ENCODE measurements at regions of chr14 and their contacts with region 1.

Region 1: DNA sequence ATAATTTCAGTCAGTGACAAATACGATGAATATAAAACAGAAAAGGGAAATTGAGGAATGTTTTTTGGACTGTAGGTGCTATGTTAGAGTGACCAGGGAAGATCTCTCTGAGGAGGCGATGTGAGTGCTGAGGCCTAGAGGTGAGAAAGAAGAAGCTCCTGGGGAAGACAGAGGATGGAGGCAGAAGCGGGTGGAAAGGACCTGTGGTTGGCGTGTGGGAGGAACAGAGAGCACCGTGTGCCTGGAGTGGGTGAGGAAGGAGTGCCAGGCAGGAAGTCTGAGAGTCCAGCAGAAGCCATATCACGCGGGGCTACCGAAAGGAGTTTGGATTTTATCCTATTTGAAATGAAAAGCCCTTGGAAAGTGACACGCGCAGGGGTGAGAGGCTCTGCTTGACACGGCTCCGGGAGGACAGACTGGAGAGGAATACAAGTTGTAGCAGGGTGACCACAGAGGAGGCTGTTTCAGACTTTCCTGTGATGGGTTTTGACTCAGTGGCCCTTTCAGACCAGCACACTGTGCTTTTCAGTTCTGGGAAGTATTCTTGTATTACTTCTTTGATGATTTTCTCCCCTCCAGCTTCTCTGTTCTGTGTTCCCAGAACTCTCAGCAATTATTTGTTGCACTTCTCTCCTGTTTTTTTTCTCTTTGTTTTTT is 96.9 kb downstream of the VRK1 start:
- DNase-seq: no peak
- H3K4me3 ChIP-seq: no peak overlapping the region
- H3K27ac ChIP-seq: no peak overlapping the region
- H3K4me1 ChIP-seq: no peaks in the 10 kb centered on the region
- H3K27me3 ChIP-seq: no peaks in the 10 kb centered on the region
- CTCF ChIP-seq: no peak

Region 2: GRCh38 chr14:96824283-96824682 is 69.8 kb before region 1 on chr14:
- CTCF ChIA-PET with region 1: no interaction called
- POLR2A ChIA-PET with region 1: no interaction called
- intact Hi-C with region 1: loop called (anchors 2 kb)
- DNase-seq: no peak
- H3K4me3 ChIP-seq: no peak overlapping the region
- H3K27ac ChIP-seq: no peak overlapping the region
- H3K4me1 ChIP-seq: no peaks in the 10 kb centered on the region; the same call in 1 of the 2 replicates
- H3K27me3 ChIP-seq: no peaks in the 10 kb centered on the region
- CTCF ChIP-seq: no peak

Region 3: GRCh38 chr14:97458661-97459579 is 564.8 kb after region 1 on chr14:
- CTCF ChIA-PET with region 1: no interaction called
- POLR2A ChIA-PET with region 1: no interaction called
- intact Hi-C with region 1: no loop called
- DNase-seq: no peak
- H3K4me3 ChIP-seq: no peak overlapping the region
- H3K27ac ChIP-seq: no peak overlapping the region
- H3K4me1 ChIP-seq: no peaks in the 10 kb centered on the region
- H3K27me3 ChIP-seq: peaks cover 6% of the 10 kb centered on the region; the same call in 1 of the 2 replicates
- CTCF ChIP-seq: no peak

Region 4: GRCh38 chr14:97943619-97944018 is 1049.5 kb after region 1 on chr14:
- CTCF ChIA-PET with region 1: no interaction called
- POLR2A ChIA-PET with region 1: no interaction called
- intact Hi-C with region 1: no loop called
- DNase-seq: no peak
- H3K4me3 ChIP-seq: no peak overlapping the region
- H3K27ac ChIP-seq: no peak overlapping the region
- H3K4me1 ChIP-seq: no peaks in the 10 kb centered on the region
- H3K27me3 ChIP-seq: no peaks in the 10 kb centered on the region
- CTCF ChIP-seq: no peak

Measured in PC-9 (cell line).